CD4-positive, alpha-beta T cell (primary cell): ENCODE measurements at regions of chr12 and their contacts with region 1.

Region 1: DNA sequence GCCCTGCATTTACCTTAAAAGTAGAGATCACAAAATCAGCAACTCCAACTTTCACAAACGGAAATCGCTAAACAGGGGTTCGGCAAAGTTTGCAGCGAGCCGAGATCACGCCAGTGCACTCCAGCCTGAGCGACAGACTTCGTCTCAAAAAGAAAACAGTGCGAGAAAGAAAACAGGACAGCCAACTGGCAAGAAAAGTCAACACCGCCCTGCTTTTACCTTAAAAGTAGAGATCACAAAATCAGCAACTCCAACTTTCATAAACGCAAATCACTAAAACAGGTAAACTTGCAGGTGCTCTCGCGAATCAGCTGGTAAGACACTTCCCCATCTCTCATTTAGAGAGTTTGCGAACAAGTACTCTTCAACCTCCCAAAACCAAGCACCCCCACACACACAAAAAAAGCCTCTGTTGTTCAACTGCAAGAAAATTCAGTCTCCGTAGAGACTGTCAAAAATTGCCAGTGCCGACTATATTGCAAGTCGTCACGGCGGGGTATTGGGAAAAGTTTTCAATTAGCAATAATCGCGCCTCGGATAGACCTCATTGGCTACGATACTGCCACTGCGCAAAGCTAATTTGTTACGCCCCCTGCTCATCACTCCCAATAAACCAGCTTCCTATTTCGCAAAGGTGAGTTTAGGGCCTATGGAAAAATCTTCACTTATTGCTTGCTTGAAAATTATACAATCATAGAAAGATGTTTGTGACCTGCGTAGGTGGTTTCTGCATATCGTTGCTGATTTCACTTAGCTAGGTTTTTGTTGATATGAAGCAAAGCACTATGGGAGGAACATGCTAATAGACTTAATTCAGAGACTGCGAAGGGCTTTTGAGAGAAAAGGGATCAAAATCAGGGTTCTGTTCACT is at the start of gene RNU4-1:
- DNase-seq: peak; percentile 49 to 92 (median 64)
- ATAC-seq: peak; percentile 51
- H3K4me3 ChIP-seq: peak within 1 kb of the TSS; percentile 75
- H3K4me3 Mint-ChIP-seq: no peak within 1 kb of the TSS
- H3K27ac ChIP-seq: peak within 1 kb of the TSS; percentile 99 to 100
- H3K27ac Mint-ChIP-seq: no peak within 1 kb of the TSS
- H3K4me1 ChIP-seq: peaks cover 23% of the 10 kb centered on the region
- H3K4me1 Mint-ChIP-seq: peaks cover 5% of the 10 kb centered on the region
- H3K27me3 ChIP-seq: no peaks in the 10 kb centered on the region
- H3K27me3 Mint-ChIP-seq: no peaks in the 10 kb centered on the region
- CTCF ChIP-seq: no peak
- total RNA-seq, gene RNU4-1: 913 to 1,035 TPM

Region 2: DNA sequence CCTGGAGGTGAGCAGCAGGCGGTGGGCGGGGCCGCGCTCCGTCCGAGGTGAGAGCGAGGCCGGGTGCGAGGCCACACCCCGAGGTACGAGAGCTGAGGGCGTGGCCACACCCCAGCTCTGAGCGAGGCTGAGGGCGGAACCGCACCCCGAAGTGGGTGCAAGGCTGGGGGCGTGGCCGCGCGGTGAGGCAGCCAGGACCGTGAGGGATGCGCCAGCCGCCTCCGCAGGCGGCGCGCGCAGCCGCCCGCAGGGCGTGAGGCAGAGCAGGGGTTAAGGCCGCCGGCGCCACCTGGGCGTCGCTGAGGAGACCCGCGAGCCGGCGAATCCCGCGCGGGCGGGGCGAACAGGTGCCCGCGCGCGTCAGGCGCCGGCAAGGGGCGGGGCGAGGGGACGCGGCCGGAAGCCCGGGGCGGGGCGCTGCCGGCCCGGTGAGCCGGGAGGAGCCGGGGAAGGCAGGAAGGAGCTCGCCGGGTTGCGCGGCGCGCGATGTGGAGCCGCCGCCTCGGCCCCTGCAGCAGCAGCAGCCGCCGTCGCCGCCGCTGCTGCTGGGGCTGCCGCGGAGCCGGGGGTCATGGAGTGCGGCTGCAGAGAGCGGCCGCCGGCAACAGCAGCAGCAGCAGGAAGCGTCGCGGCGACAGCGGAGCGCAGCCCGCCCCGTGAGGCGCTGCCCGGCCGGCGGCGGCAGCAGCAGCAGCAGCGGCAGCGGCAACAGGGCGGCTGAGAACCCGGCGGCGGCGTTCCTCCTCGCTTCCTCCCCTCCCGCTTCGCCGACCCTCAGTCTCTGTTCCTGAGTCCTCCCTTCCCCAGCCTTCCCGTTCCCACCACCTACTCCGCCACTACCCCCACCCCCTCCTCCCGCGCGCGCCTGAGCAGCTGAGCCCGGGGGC is 303.9 kb before region 1 on chr12 and contains the start of gene BICDL1:
- CTCF ChIA-PET with region 1: no interaction called
- POLR2A ChIA-PET with region 1: interaction called, 19 read pairs
- intact Hi-C with region 1: no loop called
- DNase-seq: peak; percentile 94 to 100 (median 98)
- ATAC-seq: peak; percentile 80
- H3K4me3 ChIP-seq: peak within 1 kb of the TSS; percentile 70
- H3K4me3 Mint-ChIP-seq: peak within 1 kb of the TSS; percentile 95
- H3K27ac ChIP-seq: peak within 1 kb of the TSS; percentile 76 to 90
- H3K27ac Mint-ChIP-seq: peak within 1 kb of the TSS; percentile 97
- H3K4me1 ChIP-seq: peaks cover 24% of the 10 kb centered on the region
- H3K4me1 Mint-ChIP-seq: peaks cover 42% of the 10 kb centered on the region
- H3K27me3 ChIP-seq: no peaks in the 10 kb centered on the region
- H3K27me3 Mint-ChIP-seq: no peaks in the 10 kb centered on the region
- CTCF ChIP-seq: no peak
- total RNA-seq, gene BICDL1: 143 to 146 TPM

Region 3: GRCh38 chr12:120116792-120117651 is 175.9 kb before region 1 on chr12:
- CTCF ChIA-PET with region 1: no interaction called
- POLR2A ChIA-PET with region 1: interaction called, 32 read pairs
- intact Hi-C with region 1: no loop called
- DNase-seq: peak; percentile 96 to 99 (median 98)
- ATAC-seq: peak; percentile 75
- H3K4me3 ChIP-seq: peak overlapping the region; percentile 86
- H3K4me3 Mint-ChIP-seq: peak overlapping the region; percentile 91
- H3K27ac ChIP-seq: peak overlapping the region; percentile 94 to 95
- H3K27ac Mint-ChIP-seq: peak overlapping the region; percentile 84
- H3K4me1 ChIP-seq: peaks cover 61% of the 10 kb centered on the region
- H3K4me1 Mint-ChIP-seq: peaks cover 76% of the 10 kb centered on the region
- H3K27me3 ChIP-seq: no peaks in the 10 kb centered on the region
- H3K27me3 Mint-ChIP-seq: no peaks in the 10 kb centered on the region
- CTCF ChIP-seq: no peak

Region 4: GRCh38 chr12:120234643-120235368 is 58.1 kb before region 1 on chr12:
- CTCF ChIA-PET with region 1: interaction called, 5 read pairs
- POLR2A ChIA-PET with region 1: interaction called, 159 read pairs
- intact Hi-C with region 1: no loop called
- DNase-seq: peak in 2 of 14 experiments; percentile 39 to 56
- ATAC-seq: no peak
- H3K4me3 ChIP-seq: no peak overlapping the region
- H3K4me3 Mint-ChIP-seq: no peak overlapping the region
- H3K27ac ChIP-seq: no peak overlapping the region
- H3K27ac Mint-ChIP-seq: peak overlapping the region; percentile 88
- H3K4me1 ChIP-seq: peaks cover 99% of the 10 kb centered on the region
- H3K4me1 Mint-ChIP-seq: peaks cover 85% of the 10 kb centered on the region
- H3K27me3 ChIP-seq: no peaks in the 10 kb centered on the region
- H3K27me3 Mint-ChIP-seq: no peaks in the 10 kb centered on the region
- CTCF ChIP-seq: no peak

Region 5: DNA sequence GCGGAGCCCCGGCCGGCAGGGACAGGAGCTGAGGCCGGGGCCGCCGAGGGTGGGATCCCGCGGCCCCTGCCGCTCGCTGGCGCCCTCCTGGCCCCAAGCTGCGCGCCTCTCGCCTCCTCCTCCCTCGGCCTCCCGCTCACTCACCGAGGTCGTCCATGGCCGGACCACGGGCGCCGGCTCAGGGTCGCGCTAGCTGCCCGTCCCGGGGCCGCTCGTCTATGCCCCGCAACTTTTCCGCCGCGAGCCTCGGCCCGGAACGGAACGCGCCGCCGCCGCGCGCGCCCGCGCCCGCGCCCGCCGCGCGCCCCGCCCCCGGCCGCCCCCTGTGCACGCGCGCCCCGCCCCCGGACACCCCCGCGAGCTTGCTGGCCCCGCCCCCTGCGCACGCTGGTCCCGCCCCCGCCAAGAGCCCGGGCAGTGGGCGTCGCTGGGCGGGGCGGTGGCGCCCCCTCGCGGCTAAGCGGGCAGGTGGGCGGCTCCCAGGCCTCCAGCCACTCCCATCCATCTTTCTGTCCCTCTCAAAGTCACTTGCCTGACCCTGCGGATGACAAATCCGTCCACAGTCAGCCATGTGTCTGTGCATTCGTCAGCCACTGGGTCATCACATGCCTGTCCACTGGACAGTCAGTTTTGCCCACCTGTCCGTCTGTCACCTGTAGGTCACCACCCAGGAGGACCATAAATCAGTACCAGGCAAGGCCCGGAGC is 27.3 kb before region 1 on chr12 and contains the start of gene PXN:
- CTCF ChIA-PET with region 1: interaction called, 13 read pairs
- POLR2A ChIA-PET with region 1: interaction called, 198 read pairs
- intact Hi-C with region 1: loop called in 1 of 2 experiments (anchors 1 kb)
- DNase-seq: peak; percentile 82 to 96 (median 91)
- ATAC-seq: peak; percentile 83
- H3K4me3 ChIP-seq: peak within 1 kb of the TSS; percentile 95
- H3K4me3 Mint-ChIP-seq: peak within 1 kb of the TSS; percentile 96
- H3K27ac ChIP-seq: peak within 1 kb of the TSS; percentile 60 to 83
- H3K27ac Mint-ChIP-seq: peak within 1 kb of the TSS; percentile 95
- H3K4me1 ChIP-seq: peaks cover 46% of the 10 kb centered on the region
- H3K4me1 Mint-ChIP-seq: peaks cover 49% of the 10 kb centered on the region
- H3K27me3 ChIP-seq: no peaks in the 10 kb centered on the region
- H3K27me3 Mint-ChIP-seq: no peaks in the 10 kb centered on the region
- CTCF ChIP-seq: peak; percentile 72
- total RNA-seq, gene PXN: 229 to 230 TPM

Region 6: GRCh38 chr12:120437754-120438494 is 145.0 kb after region 1 on chr12 and contains the start of gene COX6A1:
- CTCF ChIA-PET with region 1: no interaction called
- POLR2A ChIA-PET with region 1: interaction called, 11 read pairs
- intact Hi-C with region 1: no loop called
- DNase-seq: peak; percentile 91 to 100 (median 96)
- ATAC-seq: peak; percentile 94
- H3K4me3 ChIP-seq: peak within 1 kb of the TSS; percentile 88
- H3K4me3 Mint-ChIP-seq: peak within 1 kb of the TSS; percentile 97
- H3K27ac ChIP-seq: peak within 1 kb of the TSS; percentile 69 to 88
- H3K27ac Mint-ChIP-seq: peak within 1 kb of the TSS; percentile 94
- H3K4me1 ChIP-seq: peaks cover 26% of the 10 kb centered on the region
- H3K4me1 Mint-ChIP-seq: peaks cover 31% of the 10 kb centered on the region
- H3K27me3 ChIP-seq: no peaks in the 10 kb centered on the region
- H3K27me3 Mint-ChIP-seq: no peaks in the 10 kb centered on the region
- CTCF ChIP-seq: no peak
- total RNA-seq, gene COX6A1: 112 to 116 TPM

Region 7: DNA sequence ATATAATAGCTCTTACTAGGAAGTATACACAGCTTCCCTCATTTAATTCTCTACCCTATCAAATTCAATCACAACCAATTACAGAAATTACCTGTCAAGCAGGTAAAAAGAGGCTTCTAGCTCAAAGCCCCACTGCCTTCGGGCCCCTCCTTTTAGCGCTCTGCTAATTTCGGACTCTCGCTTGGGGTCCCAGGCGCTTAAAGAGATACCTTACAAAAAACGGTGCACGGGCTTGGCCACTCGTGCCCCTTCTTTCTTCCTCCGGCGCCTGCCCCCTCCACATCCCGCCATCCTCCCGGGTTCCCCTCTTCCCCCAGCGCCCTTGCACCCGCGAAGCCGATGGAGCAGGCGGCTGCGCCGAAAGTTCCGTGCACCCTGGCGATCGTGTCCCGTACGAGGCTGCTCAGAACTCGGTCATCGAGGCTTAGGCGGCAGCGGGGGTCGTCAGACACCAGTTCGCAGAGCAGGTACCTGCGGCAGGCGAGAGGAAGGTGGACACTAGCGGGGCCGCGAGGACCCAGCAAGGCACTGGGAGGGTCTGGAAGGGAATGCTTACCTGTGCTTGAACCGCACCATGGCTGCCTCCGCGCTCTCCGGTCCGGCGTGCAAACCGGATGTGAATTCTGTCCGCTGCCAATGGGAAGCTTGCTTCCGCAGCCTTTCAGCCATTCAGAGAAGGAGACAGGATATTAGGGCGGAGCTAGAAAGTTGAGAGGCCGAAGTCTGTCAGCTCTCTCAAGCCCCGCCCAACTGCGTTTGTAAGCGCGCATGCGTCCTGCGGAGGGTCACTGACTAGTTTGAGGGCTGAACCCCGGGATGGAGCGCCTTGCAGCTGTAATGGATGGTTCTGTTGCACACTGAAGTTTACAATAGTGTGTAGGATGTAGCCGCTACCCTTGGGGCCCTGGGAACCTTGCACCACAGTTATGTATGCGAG is 288.2 kb after region 1 on chr12 and contains the start of gene POP5:
- CTCF ChIA-PET with region 1: no interaction called
- POLR2A ChIA-PET with region 1: interaction called, 13 read pairs
- intact Hi-C with region 1: no loop called
- DNase-seq: peak; percentile 80 to 97 (median 90)
- ATAC-seq: peak; percentile 90
- H3K4me3 ChIP-seq: peak within 1 kb of the TSS; percentile 92
- H3K4me3 Mint-ChIP-seq: peak within 1 kb of the TSS; percentile 97
- H3K27ac ChIP-seq: peak within 1 kb of the TSS; percentile 66 to 69
- H3K27ac Mint-ChIP-seq: peak within 1 kb of the TSS; percentile 85
- H3K4me1 ChIP-seq: peaks cover 32% of the 10 kb centered on the region
- H3K4me1 Mint-ChIP-seq: peaks cover 45% of the 10 kb centered on the region
- H3K27me3 ChIP-seq: no peaks in the 10 kb centered on the region
- H3K27me3 Mint-ChIP-seq: peaks cover 21% of the 10 kb centered on the region
- CTCF ChIP-seq: no peak
- total RNA-seq, gene POP5: 17.9 to 22.0 TPM